ENCODE measurements at regions of chr18 and their contacts with region 1.

Region 1: GRCh38 chr18:27005589-27005988 is 140.1 kb upstream of the AQP4 start:
- DNase-seq: peak; percentile 49
- H3K4me3 ChIP-seq: no peak overlapping the region
- H3K27ac ChIP-seq: no peak overlapping the region
- H3K4me1 ChIP-seq: no peaks in the 10 kb centered on the region
- CTCF ChIP-seq: peak; percentile 81

Region 2: GRCh38 chr18:26405190-26405801 is 600.3 kb before region 1 on chr18:
- CTCF ChIA-PET with region 1: no interaction called
- POLR2A ChIA-PET with region 1: no interaction called
- intact Hi-C with region 1: loop called (anchors 10 kb)
- DNase-seq: peak; percentile 61
- H3K4me3 ChIP-seq: no peak overlapping the region
- H3K27ac ChIP-seq: no peak overlapping the region
- H3K4me1 ChIP-seq: no peaks in the 10 kb centered on the region
- CTCF ChIP-seq: peak; percentile 69

Region 3: DNA sequence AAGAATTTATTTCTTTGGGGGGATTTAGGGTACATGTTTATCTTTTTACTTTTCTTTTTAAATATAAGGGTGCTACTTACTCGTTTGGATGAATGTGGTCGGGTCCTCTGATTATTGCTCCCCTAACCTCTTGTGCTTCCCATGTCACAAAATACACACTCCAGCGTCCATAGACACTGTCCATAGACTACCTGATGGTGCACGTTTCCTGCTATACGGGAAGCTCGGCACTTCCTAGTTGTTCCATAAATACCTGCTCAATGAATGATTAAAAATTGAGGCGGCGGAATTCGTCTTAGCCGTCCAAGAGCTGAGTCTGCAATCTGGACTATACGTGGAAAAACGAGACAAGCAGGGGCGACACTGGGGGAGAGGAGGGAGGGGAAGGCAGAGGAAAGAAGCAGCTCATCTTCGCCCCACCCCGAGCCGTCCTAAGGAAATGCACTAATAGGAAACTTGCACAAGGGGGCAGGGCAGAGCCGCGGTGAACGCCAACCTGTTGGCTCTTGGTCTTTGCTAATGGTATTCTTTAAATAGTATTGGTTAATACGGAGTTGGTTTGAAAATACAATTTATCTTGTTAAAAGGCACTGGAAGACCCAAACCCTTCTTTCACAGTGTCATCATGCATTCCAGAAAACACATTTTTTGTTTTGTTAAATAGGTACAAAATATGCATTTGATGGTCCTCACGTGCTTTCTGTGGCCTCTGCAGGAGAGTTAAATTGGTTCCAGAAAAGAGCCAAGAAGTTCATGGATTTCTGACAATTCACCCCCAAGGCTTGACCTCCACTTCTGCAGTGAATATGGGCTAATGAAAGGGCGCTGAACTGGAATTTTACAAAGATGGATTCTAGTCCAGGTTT is 384.2 kb before region 1 on chr18:
- CTCF ChIA-PET with region 1: no interaction called
- POLR2A ChIA-PET with region 1: no interaction called
- intact Hi-C with region 1: loop called (anchors 10 kb)
- DNase-seq: peak; percentile 60
- H3K4me3 ChIP-seq: peak overlapping the region; percentile 38
- H3K27ac ChIP-seq: no peak overlapping the region
- H3K4me1 ChIP-seq: no peaks in the 10 kb centered on the region
- CTCF ChIP-seq: peak; percentile 81

Region 4: DNA sequence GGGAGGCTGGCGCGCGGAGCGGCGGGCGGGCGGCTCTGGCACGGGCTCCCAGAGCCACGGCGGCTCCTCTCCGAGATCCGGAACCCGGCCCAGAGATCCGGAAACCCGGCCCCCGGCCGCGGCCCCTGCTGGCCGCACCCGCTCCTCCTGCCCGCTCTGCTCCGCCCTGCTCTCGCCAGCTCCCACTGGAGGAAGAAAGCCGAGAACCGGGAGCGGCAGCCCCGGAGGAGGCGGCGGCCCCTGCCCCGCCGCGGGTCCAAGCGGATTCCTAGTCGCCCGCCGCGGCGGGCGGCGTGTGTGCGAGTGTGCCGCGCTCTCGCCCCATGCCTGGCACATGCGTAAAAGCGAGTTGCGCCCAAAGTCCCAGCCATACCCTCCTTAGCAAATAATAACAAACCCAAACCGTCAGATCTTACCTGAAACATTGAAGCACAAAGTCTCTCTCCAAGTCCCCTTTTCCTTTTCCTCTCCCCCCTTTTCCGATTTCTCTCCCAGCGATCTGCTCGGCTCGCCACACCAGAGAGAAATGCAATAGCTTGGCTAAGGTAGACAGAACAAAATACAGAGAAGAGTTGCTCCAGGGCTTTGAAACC is 348.5 kb before region 1 on chr18:
- CTCF ChIA-PET with region 1: no interaction called
- POLR2A ChIA-PET with region 1: no interaction called
- intact Hi-C with region 1: loop called (anchors 10 kb)
- DNase-seq: no peak
- H3K4me3 ChIP-seq: peak overlapping the region; percentile 38
- H3K27ac ChIP-seq: no peak overlapping the region
- H3K4me1 ChIP-seq: no peaks in the 10 kb centered on the region
- CTCF ChIP-seq: no peak

Region 5: GRCh38 chr18:26804519-26804918 is 201.1 kb before region 1 on chr18:
- CTCF ChIA-PET with region 1: no interaction called
- POLR2A ChIA-PET with region 1: no interaction called
- intact Hi-C with region 1: loop called (anchors 2 kb)
- DNase-seq: no peak
- H3K4me3 ChIP-seq: no peak overlapping the region
- H3K27ac ChIP-seq: no peak overlapping the region
- H3K4me1 ChIP-seq: no peaks in the 10 kb centered on the region
- CTCF ChIP-seq: peak; percentile 57

Region 6: DNA sequence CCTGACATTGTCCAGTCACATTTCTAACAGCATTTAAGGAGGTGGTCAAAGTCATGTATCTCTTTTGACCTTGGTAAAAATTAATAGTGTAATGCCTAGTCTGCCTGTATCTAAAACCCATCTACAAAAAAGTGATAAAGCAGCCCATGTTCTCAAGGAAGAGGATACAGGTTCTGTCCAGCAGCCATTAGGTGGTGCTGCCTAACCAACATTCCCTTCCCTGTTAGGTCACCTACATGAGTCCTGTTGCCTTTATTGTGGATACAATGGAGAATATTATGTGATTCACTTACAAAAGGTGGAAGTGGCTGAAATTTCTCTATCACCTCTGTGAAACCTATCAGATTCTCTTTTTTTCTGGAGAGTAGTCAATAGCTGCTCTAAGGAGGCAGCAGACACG is 192.5 kb before region 1 on chr18:
- CTCF ChIA-PET with region 1: no interaction called
- POLR2A ChIA-PET with region 1: no interaction called
- intact Hi-C with region 1: loop called (anchors 1 kb)
- DNase-seq: peak; percentile 20
- H3K4me3 ChIP-seq: no peak overlapping the region
- H3K27ac ChIP-seq: no peak overlapping the region
- H3K4me1 ChIP-seq: no peaks in the 10 kb centered on the region
- CTCF ChIP-seq: peak; percentile 64

Region 7: DNA sequence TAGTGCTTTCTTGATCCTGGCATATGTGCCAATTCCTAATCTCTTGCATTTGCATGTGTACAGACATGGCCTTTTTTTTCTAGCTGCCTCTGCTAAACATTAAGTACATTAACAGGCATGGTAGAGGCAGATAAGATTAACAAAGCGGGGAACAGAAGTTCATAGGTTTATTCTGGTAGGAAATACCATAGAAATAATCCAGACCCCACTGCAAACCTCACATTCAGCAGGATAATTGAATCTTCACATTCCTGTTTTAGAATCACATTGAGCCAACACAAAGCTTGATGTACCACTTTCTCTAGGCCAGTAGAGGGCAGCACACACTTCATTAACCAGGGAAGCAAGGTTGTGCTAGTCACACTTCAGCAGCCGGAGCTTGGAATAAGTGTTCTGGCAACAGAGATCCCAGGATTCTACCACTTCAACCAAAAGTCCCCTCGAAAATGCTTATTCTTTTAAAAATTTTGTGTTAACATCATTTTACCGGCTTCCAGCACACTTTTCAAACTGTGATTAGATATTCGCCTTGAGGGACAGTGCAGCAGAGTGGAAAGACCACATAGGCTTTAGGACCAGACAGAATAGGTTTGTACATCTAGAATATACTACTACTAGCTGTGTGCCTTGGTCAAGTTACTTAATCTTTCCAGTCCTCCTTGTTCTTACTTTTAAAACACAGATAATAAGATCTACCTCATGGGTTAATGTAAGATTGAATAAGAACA is 599.7 kb after region 1 on chr18:
- CTCF ChIA-PET with region 1: no interaction called
- POLR2A ChIA-PET with region 1: no interaction called
- intact Hi-C with region 1: loop called (anchors 5 kb)
- DNase-seq: peak; percentile 57
- H3K4me3 ChIP-seq: no peak overlapping the region
- H3K27ac ChIP-seq: no peak overlapping the region
- H3K4me1 ChIP-seq: no peaks in the 10 kb centered on the region
- CTCF ChIP-seq: peak; percentile 89